Activated T-helper 2 cell treated with anti-CD3 and anti-CD28 coated beads, Interferon-gamma antibody, Interleukin-2, Interleukin-4, amounts not matched to agents 10 μg/mL and 5 μg/mL and 100 μg/mL, durations not matched to agents 14 hours and 24 hours and 36 hours (primary cell): ENCODE measurements at regions of chrX and their contacts with region 1.

Region 1: GRCh38 chrX:46588263-46588662 is 14.7 kb downstream of the CHST7 start:
- DNase-seq: no peak
- H3K4me3 Mint-ChIP-seq: peak overlapping the region; percentile 65
- H3K27ac Mint-ChIP-seq: peak overlapping the region; percentile 84
- H3K4me1 Mint-ChIP-seq: peaks cover 21% of the 10 kb centered on the region
- H3K27me3 Mint-ChIP-seq: no peaks in the 10 kb centered on the region

Region 2: GRCh38 chrX:46485897-46486296 is 102.4 kb before region 1 on chrX:
- intact Hi-C with region 1: no loop called
- DNase-seq: no peak
- H3K4me3 Mint-ChIP-seq: no peak overlapping the region
- H3K27ac Mint-ChIP-seq: no peak overlapping the region
- H3K4me1 Mint-ChIP-seq: no peaks in the 10 kb centered on the region
- H3K27me3 Mint-ChIP-seq: no peaks in the 10 kb centered on the region

Region 3: GRCh38 chrX:46573331-46573891 is 14.9 kb before region 1 on chrX and contains the start of gene CHST7:
- intact Hi-C with region 1: loop called (anchors 1 kb)
- DNase-seq: peak; percentile 38
- H3K4me3 Mint-ChIP-seq: peak within 1 kb of the TSS; percentile 78
- H3K27ac Mint-ChIP-seq: peak within 1 kb of the TSS; percentile 42
- H3K4me1 Mint-ChIP-seq: peaks cover 32% of the 10 kb centered on the region
- H3K27me3 Mint-ChIP-seq: no peaks in the 10 kb centered on the region
- total RNA-seq, gene CHST7: 3.8 TPM in 2 replicates

Region 4: GRCh38 chrX:46665232-46666152 is 77.2 kb after region 1 on chrX:
- intact Hi-C with region 1: no loop called
- DNase-seq: no peak
- H3K4me3 Mint-ChIP-seq: no peak overlapping the region
- H3K27ac Mint-ChIP-seq: peak overlapping the region; percentile 63
- H3K4me1 Mint-ChIP-seq: peaks cover 16% of the 10 kb centered on the region
- H3K27me3 Mint-ChIP-seq: no peaks in the 10 kb centered on the region